ENCODE measurements at regions of chr2 and their contacts with region 1.

Region 1: GRCh38 chr2:44167940-44168680 is 565 bp upstream of the PPM1B start:
- DNase-seq: peak; percentile 100
- H3K4me3 ChIP-seq: peak overlapping the region; percentile 55 to 68
- H3K27ac ChIP-seq: peak overlapping the region; percentile 95 to 96
- H3K4me1 ChIP-seq: peaks cover 0 to 29% (median 5%) of the 10 kb centered on the region in 4 donors
- H3K27me3 ChIP-seq: no peaks in the 10 kb centered on the region
- CTCF ChIP-seq: no peak

Region 2: GRCh38 chr2:44087036-44087713 is 80.9 kb before region 1 on chr2:
- intact Hi-C with region 1: loop called (anchors 10 kb)
- DNase-seq: peak; percentile 86 to 93
- H3K4me3 ChIP-seq: peak overlapping the region; percentile 41 to 53
- H3K27ac ChIP-seq: peak overlapping the region; percentile 68 to 85
- H3K4me1 ChIP-seq: peaks cover 0 to 17% (median 13%) of the 10 kb centered on the region in 4 donors
- H3K27me3 ChIP-seq: no peaks in the 10 kb centered on the region
- CTCF ChIP-seq: peak; percentile 95 to 96

Region 3: GRCh38 chr2:44233450-44234128 is 65.5 kb after region 1 on chr2:
- intact Hi-C with region 1: loop called (anchors 10 kb)
- DNase-seq: no peak
- H3K4me3 ChIP-seq: no peak overlapping the region
- H3K27ac ChIP-seq: no peak overlapping the region
- H3K4me1 ChIP-seq: peaks cover 0 to 17% (median 5%) of the 10 kb centered on the region in 4 donors
- H3K27me3 ChIP-seq: no peaks in the 10 kb centered on the region
- CTCF ChIP-seq: no peak

Region 4: GRCh38 chr2:44267796-44268648 is 99.9 kb after region 1 on chr2:
- intact Hi-C with region 1: loop called (anchors 2 kb)
- DNase-seq: peak; percentile 59 to 90
- H3K4me3 ChIP-seq: peak overlapping the region in 1 of 2 donors; percentile 2
- H3K27ac ChIP-seq: peak overlapping the region; percentile 88 to 91
- H3K4me1 ChIP-seq: peaks cover 0 to 54% (median 25%) of the 10 kb centered on the region in 4 donors
- H3K27me3 ChIP-seq: no peaks in the 10 kb centered on the region
- CTCF ChIP-seq: no peak

Measured in tibial artery (tissue), 4 donors.